MCF 10A (cell line): ENCODE measurements at regions of chr22 and their contacts with region 1.

Region 1: GRCh38 chr22:27919222-27919941 is at the start of gene PITPNB:
- DNase-seq: peak; percentile 98
- H3K4me3 Mint-ChIP-seq: peak within 1 kb of the TSS; percentile 91
- H3K27ac Mint-ChIP-seq: peak within 1 kb of the TSS; percentile 97
- H3K4me1 Mint-ChIP-seq: peaks cover 39% of the 10 kb centered on the region
- H3K27me3 Mint-ChIP-seq: no peaks in the 10 kb centered on the region
- CTCF ChIP-seq: no peak
- total RNA-seq, gene PITPNB: 93.1 and 124 TPM in 2 replicates

Region 2: GRCh38 chr22:27866132-27867086 is 53.0 kb before region 1 on chr22:
- CTCF ChIA-PET with region 1: no interaction called
- POLR2A ChIA-PET with region 1: interaction called, 11 read pairs
- intact Hi-C with region 1: no loop called
- DNase-seq: peak; percentile 68
- H3K4me3 Mint-ChIP-seq: peak overlapping the region; percentile 33
- H3K27ac Mint-ChIP-seq: peak overlapping the region; percentile 98
- H3K4me1 Mint-ChIP-seq: peaks cover 35% of the 10 kb centered on the region
- H3K27me3 Mint-ChIP-seq: no peaks in the 10 kb centered on the region
- CTCF ChIP-seq: no peak

Region 3: GRCh38 chr22:27880778-27881394 is 38.5 kb before region 1 on chr22:
- CTCF ChIA-PET with region 1: interaction called, 29 read pairs
- POLR2A ChIA-PET with region 1: interaction called, 24 read pairs
- intact Hi-C with region 1: no loop called
- DNase-seq: peak; percentile 64
- H3K4me3 Mint-ChIP-seq: no peak overlapping the region
- H3K27ac Mint-ChIP-seq: peak overlapping the region; percentile 39
- H3K4me1 Mint-ChIP-seq: peaks cover 17% of the 10 kb centered on the region
- H3K27me3 Mint-ChIP-seq: no peaks in the 10 kb centered on the region
- CTCF ChIP-seq: peak; percentile 46

Region 4: GRCh38 chr22:27930331-27931060 is 11.1 kb after region 1 on chr22:
- CTCF ChIA-PET with region 1: interaction called, 17 read pairs
- POLR2A ChIA-PET with region 1: interaction called, 90 read pairs
- intact Hi-C with region 1: no loop called
- DNase-seq: peak; percentile 68
- H3K4me3 Mint-ChIP-seq: no peak overlapping the region
- H3K27ac Mint-ChIP-seq: peak overlapping the region; percentile 20
- H3K4me1 Mint-ChIP-seq: peaks cover 12% of the 10 kb centered on the region
- H3K27me3 Mint-ChIP-seq: no peaks in the 10 kb centered on the region
- CTCF ChIP-seq: no peak